ENCODE measurements at regions of chr4 and their contacts with region 1.

Region 1: DNA sequence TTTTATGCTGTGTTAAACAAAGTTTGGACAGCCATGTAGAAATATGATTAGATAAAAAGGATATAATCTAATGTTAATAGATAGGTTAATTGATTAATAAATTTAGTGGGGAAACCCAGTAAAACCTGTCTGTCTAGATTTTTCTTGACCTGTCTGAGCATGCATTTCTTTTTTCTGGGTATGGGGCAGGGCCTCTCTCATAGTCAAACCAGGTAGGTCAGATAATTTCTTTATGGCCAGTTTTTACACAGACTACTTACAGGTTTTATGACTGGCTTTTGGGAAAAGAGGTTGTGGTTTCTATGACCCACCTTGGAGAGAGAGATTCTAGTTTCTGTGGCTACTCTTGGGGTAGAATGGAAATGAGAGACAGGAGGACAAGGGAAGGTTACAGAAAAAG is 135.6 kb upstream of the EPHA5 start:
- DNase-seq: no peak
- H3K4me3 ChIP-seq: no peak overlapping the region
- H3K27ac ChIP-seq: no peak overlapping the region
- H3K4me1 ChIP-seq: no peaks in the 10 kb centered on the region
- H3K27me3 ChIP-seq: no peaks in the 10 kb centered on the region
- CTCF ChIP-seq: no peak
- POLR2A ChIP-seq: no peak

Region 2: GRCh38 chr4:65747386-65747785 is 58.5 kb before region 1 on chr4:
- intact Hi-C with region 1: no loop called
- DNase-seq: no peak
- H3K4me3 ChIP-seq: no peak overlapping the region
- H3K27ac ChIP-seq: no peak overlapping the region
- H3K4me1 ChIP-seq: no peaks in the 10 kb centered on the region
- H3K27me3 ChIP-seq: no peaks in the 10 kb centered on the region
- CTCF ChIP-seq: no peak
- POLR2A ChIP-seq: no peak

Region 3: GRCh38 chr4:65791807-65792308 is 14.1 kb before region 1 on chr4:
- intact Hi-C with region 1: loop called (anchors 1 kb)
- DNase-seq: no peak
- H3K4me3 ChIP-seq: no peak overlapping the region
- H3K27ac ChIP-seq: no peak overlapping the region
- H3K4me1 ChIP-seq: no peaks in the 10 kb centered on the region
- H3K27me3 ChIP-seq: no peaks in the 10 kb centered on the region
- CTCF ChIP-seq: no peak
- POLR2A ChIP-seq: no peak

Measured in vagina (tissue), 2 donors.